ENCODE measurements at regions of chr11 and their contacts with region 1.

Region 1: DNA sequence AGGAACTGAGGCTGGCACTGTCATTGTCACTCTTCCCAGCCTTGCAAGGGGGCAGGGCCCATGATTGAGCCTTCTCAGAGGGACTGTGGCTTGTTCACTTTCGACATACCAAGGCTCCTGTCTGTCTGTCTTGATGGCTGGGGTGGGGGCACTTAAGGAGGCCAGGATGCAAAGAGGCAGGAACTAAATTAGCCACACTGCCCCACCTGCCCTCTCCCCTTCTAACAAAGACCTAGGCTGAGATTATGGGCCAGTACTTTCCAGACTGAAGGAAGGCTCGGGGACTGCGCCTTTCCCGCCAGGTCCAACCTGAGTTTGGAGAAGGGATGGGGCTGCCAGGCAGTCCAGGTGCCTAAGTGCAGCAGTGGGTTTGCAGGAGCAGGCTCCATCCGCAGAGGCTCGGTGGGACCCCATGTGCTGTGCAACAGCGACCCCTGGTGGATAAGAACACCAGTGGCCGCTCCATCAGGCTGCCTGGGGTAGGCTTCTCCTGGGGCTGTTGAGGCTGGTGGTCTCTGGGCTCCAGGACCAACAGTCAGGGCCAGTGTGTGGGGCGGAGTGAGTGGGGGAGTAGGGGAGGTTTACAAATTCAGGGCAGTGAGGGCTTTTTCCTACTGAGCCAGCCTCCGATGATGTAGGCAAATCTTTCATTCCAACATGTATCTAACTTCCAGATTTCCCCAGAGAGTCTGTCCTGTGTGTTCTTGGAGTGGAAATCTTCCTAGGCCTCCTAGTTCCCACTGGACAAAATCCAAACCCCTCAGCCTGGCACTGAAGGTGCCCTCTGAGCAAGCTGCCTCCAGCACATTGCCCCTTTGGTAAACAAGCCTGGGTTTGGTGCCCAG is 93.9 kb downstream of the INSC start:
- DNase-seq: peak; percentile 82
- ATAC-seq: peak; percentile 96
- H3K4me3 Mint-ChIP-seq: no peak overlapping the region
- H3K27ac Mint-ChIP-seq: no peak overlapping the region
- H3K4me1 Mint-ChIP-seq: no peaks in the 10 kb centered on the region
- H3K27me3 Mint-ChIP-seq: no peaks in the 10 kb centered on the region
- CTCF ChIP-seq: peak; percentile 86

Region 2: GRCh38 chr11:15195454-15196200 is 13.0 kb before region 1 on chr11:
- CTCF ChIA-PET with region 1: interaction called, 23 read pairs
- POLR2A ChIA-PET with region 1: no interaction called
- intact Hi-C with region 1: no loop called
- DNase-seq: no peak
- ATAC-seq: no peak
- H3K4me3 Mint-ChIP-seq: no peak overlapping the region
- H3K27ac Mint-ChIP-seq: no peak overlapping the region
- H3K4me1 Mint-ChIP-seq: no peaks in the 10 kb centered on the region
- H3K27me3 Mint-ChIP-seq: peaks cover 10% of the 10 kb centered on the region
- CTCF ChIP-seq: no peak